ENCODE measurements at regions of chr1 and their contacts with region 1.

Region 1: DNA sequence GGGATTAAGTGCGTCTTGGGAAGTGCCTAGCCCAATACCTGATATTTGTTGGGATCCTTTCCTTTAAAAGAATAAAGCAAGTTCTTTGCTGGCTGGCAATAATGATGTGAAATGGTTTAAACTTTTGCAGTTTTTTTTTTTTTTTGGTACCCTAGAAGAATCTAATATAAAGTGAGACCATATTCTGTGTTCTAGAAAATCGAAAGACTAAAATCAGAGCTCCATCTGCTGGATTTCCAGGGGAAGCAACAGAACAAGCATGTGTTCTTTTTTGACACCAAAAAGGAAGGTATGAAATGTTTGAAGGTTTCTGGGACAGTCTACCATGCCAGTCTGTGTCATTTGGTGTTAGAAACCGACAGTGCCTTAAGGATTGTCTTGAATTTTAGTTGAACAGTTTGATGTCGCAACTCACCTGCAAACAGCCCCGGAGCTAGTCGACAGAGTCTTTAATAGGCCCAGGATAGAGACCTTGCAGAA is 6.4 kb downstream of the UTP11 start:
- DNase-seq: peak in 1 of 2 donors; percentile 0
- ATAC-seq: no peak
- H3K4me3 ChIP-seq: no peak overlapping the region
- H3K27ac ChIP-seq: no peak overlapping the region
- H3K4me1 ChIP-seq: peaks cover 0 to 4% of the 10 kb centered on the region in 2 donors
- H3K27me3 ChIP-seq: no peaks in the 10 kb centered on the region

Region 2: DNA sequence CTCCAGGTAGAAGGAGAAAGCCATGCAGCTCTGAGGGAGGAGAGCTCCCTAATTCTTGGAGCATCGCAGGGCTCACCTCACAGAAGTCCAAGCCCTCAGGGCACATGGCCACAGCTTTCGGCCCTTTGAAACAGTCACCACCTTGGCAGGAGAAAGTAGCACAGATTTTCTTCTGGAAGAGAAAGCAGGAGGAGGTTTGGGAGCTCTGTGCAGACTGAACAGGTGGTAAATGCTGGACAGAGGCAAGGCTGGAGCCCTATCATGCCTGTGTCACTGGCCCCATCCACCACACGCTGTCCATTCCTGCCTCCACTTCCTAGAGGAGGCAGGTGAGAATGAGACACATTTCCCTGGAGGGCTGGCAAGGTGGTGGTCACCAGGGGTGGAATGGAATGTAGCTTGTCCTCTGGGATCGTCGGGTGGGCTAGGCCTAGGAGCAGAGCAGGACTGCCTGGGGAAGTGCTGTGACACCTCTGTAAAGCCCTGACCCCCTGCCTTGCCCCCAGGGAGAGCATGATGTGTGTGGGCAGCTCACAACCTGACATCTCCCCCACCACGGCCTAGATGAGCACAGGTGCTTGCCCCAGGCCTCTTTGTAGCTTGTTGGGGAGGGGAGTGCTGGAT is 69.3 kb before region 1 on chr1:
- intact Hi-C with region 1: loop called in 1 of 2 experiments (anchors 2 kb)
- DNase-seq: peak in 1 of 2 donors; percentile 57
- ATAC-seq: no peak
- H3K4me3 ChIP-seq: no peak overlapping the region
- H3K27ac ChIP-seq: no peak overlapping the region
- H3K4me1 ChIP-seq: no peaks in the 10 kb centered on the region
- H3K27me3 ChIP-seq: no peaks in the 10 kb centered on the region

Region 3: DNA sequence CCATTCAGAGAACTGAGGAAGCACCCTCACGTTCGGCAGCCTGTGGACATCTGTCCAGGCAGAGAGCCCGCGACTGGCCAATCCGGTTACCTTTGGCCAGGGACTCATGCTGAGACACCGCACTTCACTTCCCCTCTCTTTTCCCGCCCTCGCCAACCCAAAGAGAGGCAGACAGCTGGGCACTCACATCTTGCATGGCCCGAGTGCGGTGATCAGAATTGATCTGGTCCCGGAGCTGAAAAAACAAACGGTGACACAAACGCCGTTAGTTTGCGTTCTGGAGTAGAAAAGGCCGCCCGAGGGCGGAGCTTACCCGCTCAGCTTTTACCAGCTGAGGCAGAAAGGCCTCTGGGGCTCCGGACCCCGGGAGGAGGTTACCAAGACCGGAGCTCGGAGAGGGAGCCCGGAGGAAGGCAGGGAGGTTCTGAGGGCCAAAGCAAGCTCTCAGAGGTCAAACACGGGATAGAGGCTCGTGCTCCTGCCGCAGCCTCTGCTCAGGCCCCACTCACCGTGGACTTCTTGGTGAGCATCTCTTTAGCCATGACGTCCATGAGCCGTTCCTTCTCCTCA is 29.5 kb before region 1 on chr1:
- intact Hi-C with region 1: loop called in 1 of 2 experiments (anchors 2 kb)
- DNase-seq: peak; percentile 70 to 81
- ATAC-seq: peak; percentile 55
- H3K4me3 ChIP-seq: peak overlapping the region; percentile 43 to 86
- H3K27ac ChIP-seq: peak overlapping the region in 1 of 2 donors; percentile 25
- H3K4me1 ChIP-seq: no peaks in the 10 kb centered on the region
- H3K27me3 ChIP-seq: no peaks in the 10 kb centered on the region

Measured in aorta (tissue), 5 donors.